Left ventricle myocardium inferior (tissue), 1 donor: ENCODE measurements at regions of chr3 and their contacts with region 1.

Region 1: GRCh38 chr3:4493014-4493940 is at the start of gene ITPR1:
- DNase-seq: peak; percentile 98
- H3K4me3 ChIP-seq: peak within 1 kb of the TSS; percentile 98
- H3K27ac ChIP-seq: peak within 1 kb of the TSS; percentile 95
- H3K4me1 ChIP-seq: peaks cover 62% of the 10 kb centered on the region
- H3K27me3 ChIP-seq: no peaks in the 10 kb centered on the region
- CTCF ChIP-seq: no peak
- total RNA-seq, gene ITPR1: 29.0 TPM

Region 2: GRCh38 chr3:4584456-4585249 is 91.4 kb after region 1 on chr3:
- intact Hi-C with region 1: loop called (anchors 10 kb)
- DNase-seq: no peak
- H3K4me3 ChIP-seq: peak overlapping the region; percentile 54
- H3K27ac ChIP-seq: peak overlapping the region; percentile 78
- H3K4me1 ChIP-seq: peaks cover 91% of the 10 kb centered on the region
- H3K27me3 ChIP-seq: no peaks in the 10 kb centered on the region
- CTCF ChIP-seq: peak; percentile 50